ENCODE measurements at regions of chr2 and their contacts with region 1.

Region 1: GRCh38 chr2:61597300-61598289 is 59.4 kb upstream of the XPO1 start:
- DNase-seq: no peak
- ATAC-seq: no peak
- H3K4me3 ChIP-seq: no peak overlapping the region
- H3K27ac ChIP-seq: no peak overlapping the region
- H3K4me1 ChIP-seq: no peaks in the 10 kb centered on the region
- H3K27me3 ChIP-seq: no peaks in the 10 kb centered on the region
- CTCF ChIP-seq: no peak
- POLR2A ChIP-seq: no peak
- RAD21 ChIP-seq: no peak

Region 2: DNA sequence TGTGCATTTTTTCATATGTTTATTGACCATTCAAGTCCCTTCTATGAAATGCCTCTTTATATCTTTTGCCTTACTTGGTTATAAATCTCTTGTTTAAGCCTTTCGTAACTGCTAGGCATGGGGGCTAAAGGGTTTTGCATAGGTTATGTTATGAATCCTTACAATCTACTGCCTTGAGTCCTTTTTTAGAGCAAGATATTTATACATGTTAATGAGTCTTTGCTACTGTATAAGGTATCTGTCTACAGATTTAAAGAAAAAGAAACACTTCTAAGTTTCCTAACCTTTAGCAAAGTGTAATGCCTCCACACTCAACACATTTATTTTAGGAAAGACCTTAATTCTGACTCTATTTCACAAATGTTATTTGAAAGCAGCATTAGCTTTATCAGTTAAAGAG is 15.9 kb before region 1 on chr2:
- CTCF ChIA-PET with region 1: no interaction called
- POLR2A ChIA-PET with region 1: no interaction called
- dilution Hi-C with region 1: no loop called
- in situ Hi-C with region 1: no loop called
- intact Hi-C with region 1: loop called (anchors 1 kb)
- DNase-seq: no peak
- ATAC-seq: no peak
- H3K4me3 ChIP-seq: no peak overlapping the region
- H3K27ac ChIP-seq: no peak overlapping the region
- H3K4me1 ChIP-seq: no peaks in the 10 kb centered on the region
- H3K27me3 ChIP-seq: no peaks in the 10 kb centered on the region
- CTCF ChIP-seq: no peak
- POLR2A ChIP-seq: no peak
- RAD21 ChIP-seq: no peak

Measured in IMR-90 (cell line).